ENCODE measurements at regions of chr4 and their contacts with region 1.

Region 1: GRCh38 chr4:184282251-184282713 is 64.6 kb upstream of the ENPP6 start:
- DNase-seq: peak in 1 of 2 donors; percentile 19
- H3K4me3 ChIP-seq: no peak overlapping the region
- H3K27ac ChIP-seq: no peak overlapping the region
- H3K4me1 ChIP-seq: peaks cover 12 to 25% of the 10 kb centered on the region in 2 donors
- H3K27me3 ChIP-seq: no peaks in the 10 kb centered on the region
- CTCF ChIP-seq: no peak
- POLR2A ChIP-seq: no peak

Region 2: DNA sequence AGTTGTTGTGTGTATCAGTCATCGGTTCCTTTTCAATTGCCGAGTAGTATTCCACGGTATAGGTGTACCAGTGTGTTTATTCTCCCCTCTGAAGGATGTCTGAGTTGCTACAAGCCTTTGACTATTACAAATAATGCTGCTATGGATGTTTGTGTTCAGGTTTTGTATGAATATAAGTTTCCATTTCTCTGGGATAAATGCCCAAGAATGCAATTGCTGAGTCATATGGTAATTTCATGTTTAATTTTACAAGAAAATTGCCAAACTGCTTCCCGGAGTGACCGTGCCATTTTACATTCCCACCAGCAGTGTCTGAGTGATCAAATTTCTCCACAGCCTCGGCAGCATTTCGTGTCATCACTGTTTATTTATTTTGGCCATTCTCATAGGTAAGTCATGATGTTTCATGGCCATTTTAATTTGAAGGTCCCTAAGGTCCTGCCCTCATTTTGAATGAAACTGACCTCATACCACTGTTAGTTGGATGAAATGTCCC is 118.1 kb after region 1 on chr4:
- intact Hi-C with region 1: loop called (anchors 10 kb)
- DNase-seq: no peak
- H3K4me3 ChIP-seq: no peak overlapping the region
- H3K27ac ChIP-seq: no peak overlapping the region
- H3K4me1 ChIP-seq: peaks cover 0 to 10% of the 10 kb centered on the region in 2 donors
- H3K27me3 ChIP-seq: no peaks in the 10 kb centered on the region
- CTCF ChIP-seq: no peak
- POLR2A ChIP-seq: no peak

Region 3: DNA sequence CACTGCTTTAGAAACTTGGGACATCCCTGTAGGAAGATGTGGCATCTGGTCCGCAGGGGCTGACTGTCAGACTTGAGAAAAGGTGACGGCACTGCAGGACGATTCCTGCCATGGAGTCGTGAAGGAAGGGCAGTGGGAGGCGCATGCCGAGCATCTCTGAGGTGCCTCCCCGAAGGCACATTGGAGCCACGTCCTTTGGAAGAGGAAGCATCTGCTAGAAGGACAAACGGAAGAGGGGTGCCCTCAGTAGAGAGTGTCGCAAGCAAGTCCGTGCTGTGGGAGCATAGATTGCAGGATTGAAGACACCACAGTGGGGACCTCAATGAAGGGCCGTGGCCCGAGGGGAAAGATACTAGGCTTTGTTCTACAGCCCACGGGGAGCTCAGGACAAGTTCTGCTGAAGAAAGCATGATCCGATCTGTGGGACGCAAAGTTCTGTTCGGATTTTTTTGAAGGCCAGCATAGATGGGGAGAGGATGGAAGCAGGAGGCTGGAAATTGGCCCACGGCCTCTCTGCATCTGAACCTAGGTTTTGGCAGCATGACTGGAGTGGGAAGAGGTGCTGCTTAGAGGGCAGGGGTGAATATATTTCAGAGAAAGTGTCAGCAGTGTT is 711.8 kb after region 1 on chr4:
- intact Hi-C with region 1: loop called (anchors 10 kb)
- DNase-seq: no peak
- H3K4me3 ChIP-seq: no peak overlapping the region
- H3K27ac ChIP-seq: no peak overlapping the region
- H3K4me1 ChIP-seq: no peaks in the 10 kb centered on the region
- H3K27me3 ChIP-seq: no peaks in the 10 kb centered on the region
- CTCF ChIP-seq: no peak
- POLR2A ChIP-seq: no peak